ENCODE measurements at regions of chr19 and their contacts with region 1.

Region 1: GRCh38 chr19:46404055-46404752 is 9.2 kb downstream of the CCDC8 start:
- DNase-seq: peak; percentile 64
- H3K4me3 ChIP-seq: peak overlapping the region; percentile 67
- H3K27ac ChIP-seq: peak overlapping the region; percentile 83
- H3K4me1 ChIP-seq: peaks cover 43% of the 10 kb centered on the region
- H3K27me3 ChIP-seq: peaks cover 49% of the 10 kb centered on the region
- CTCF ChIP-seq: peak; percentile 39

Region 2: DNA sequence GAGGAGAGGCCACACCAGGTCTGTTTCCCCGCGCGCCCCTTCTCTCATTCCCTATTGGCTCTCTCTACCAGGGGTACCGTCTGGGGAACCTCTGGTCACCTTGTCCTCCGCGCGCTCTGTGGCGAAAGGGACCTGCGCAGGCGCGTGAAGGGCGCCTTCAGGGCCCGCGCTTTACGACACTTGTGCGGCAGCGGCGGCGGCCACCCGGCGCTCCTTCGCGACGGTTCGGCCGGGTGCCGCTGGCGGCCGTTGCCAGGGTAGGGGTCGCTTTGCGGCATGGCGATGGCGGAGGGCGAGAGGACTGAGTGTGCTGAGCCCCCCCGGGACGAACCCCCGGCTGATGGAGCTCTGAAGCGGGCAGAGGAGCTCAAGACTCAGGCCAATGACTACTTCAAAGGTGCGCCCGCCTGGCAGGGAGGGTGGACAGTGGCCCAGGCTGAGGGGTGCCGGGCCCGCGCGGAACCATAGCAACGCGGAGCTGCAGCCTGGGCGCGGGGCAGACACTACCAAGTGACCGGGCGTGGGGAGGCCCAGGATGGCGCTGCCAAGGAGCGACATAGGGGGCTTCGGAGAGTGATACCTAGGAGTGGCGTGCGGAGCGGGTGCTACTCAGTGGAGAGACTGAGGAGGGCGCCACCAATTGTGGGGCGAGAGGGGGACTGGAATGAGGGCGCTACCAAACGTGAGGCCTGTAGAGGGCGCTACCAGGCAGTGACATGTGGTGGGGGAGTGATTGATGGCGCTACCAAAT is 57.2 kb before region 1 on chr19 and contains the start of gene PPP5C:
- intact Hi-C with region 1: no loop called
- DNase-seq: peak; percentile 93
- H3K4me3 ChIP-seq: peak within 1 kb of the TSS; percentile 100
- H3K27ac ChIP-seq: peak within 1 kb of the TSS; percentile 93
- H3K4me1 ChIP-seq: peaks cover 64% of the 10 kb centered on the region
- H3K27me3 ChIP-seq: no peaks in the 10 kb centered on the region
- CTCF ChIP-seq: peak; percentile 61
- total RNA-seq, gene PPP5C: 70.8 TPM

Region 3: GRCh38 chr19:46487802-46488445 is 83.7 kb after region 1 on chr19:
- intact Hi-C with region 1: loop called (anchors 2 kb)
- DNase-seq: peak; percentile 76
- H3K4me3 ChIP-seq: peak overlapping the region; percentile 59
- H3K27ac ChIP-seq: no peak overlapping the region
- H3K4me1 ChIP-seq: peaks cover 32% of the 10 kb centered on the region
- H3K27me3 ChIP-seq: peaks cover 64% of the 10 kb centered on the region
- CTCF ChIP-seq: peak; percentile 93

Measured in left ventricle myocardium inferior (tissue), 1 donor.